ENCODE measurements at regions of chr19 and their contacts with region 1.

Region 1: GRCh38 chr19:28466107-28467045 is 746.6 kb downstream of the UQCRFS1 start:
- DNase-seq: peak; percentile 45 to 58
- ATAC-seq: peak in 3 of 8 donors; percentile 11 to 57 (median 42)
- H3K4me3 ChIP-seq: no peak overlapping the region
- H3K27ac ChIP-seq: no peak overlapping the region
- H3K4me1 ChIP-seq: peaks cover 0 to 19% (median 4%) of the 10 kb centered on the region in 9 donors
- H3K27me3 ChIP-seq: peaks cover 0 to 30% (median 8%) of the 10 kb centered on the region in 7 donors
- CTCF ChIP-seq: peak; percentile 57 to 88 (median 79)

Region 2: GRCh38 chr19:28633319-28634018 is 167.1 kb after region 1 on chr19:
- intact Hi-C with region 1: loop called in 8 of 10 experiments (anchors 2 to 10 kb)
- DNase-seq: no peak
- ATAC-seq: peak in 2 of 8 donors; percentile 35 to 61
- H3K4me3 ChIP-seq: no peak overlapping the region
- H3K27ac ChIP-seq: no peak overlapping the region
- H3K4me1 ChIP-seq: no peaks in the 10 kb centered on the region
- H3K27me3 ChIP-seq: peaks cover 0 to 7% (median 0%) of the 10 kb centered on the region in 7 donors
- CTCF ChIP-seq: peak; percentile 34 to 84 (median 65)

Region 3: GRCh38 chr19:28705008-28705407 is 238.6 kb after region 1 on chr19:
- intact Hi-C with region 1: loop called in 9 of 10 experiments (anchors 1 to 10 kb)
- DNase-seq: no peak
- ATAC-seq: no peak
- H3K4me3 ChIP-seq: no peak overlapping the region
- H3K27ac ChIP-seq: no peak overlapping the region
- H3K4me1 ChIP-seq: no peaks in the 10 kb centered on the region
- H3K27me3 ChIP-seq: peaks cover 0 to 3% (median 0%) of the 10 kb centered on the region in 7 donors
- CTCF ChIP-seq: no peak

Region 4: GRCh38 chr19:28710278-28710677 is 243.9 kb after region 1 on chr19:
- intact Hi-C with region 1: loop called in 9 of 10 experiments (anchors 1 to 10 kb)
- DNase-seq: no peak
- ATAC-seq: no peak
- H3K4me3 ChIP-seq: no peak overlapping the region
- H3K27ac ChIP-seq: no peak overlapping the region
- H3K4me1 ChIP-seq: no peaks in the 10 kb centered on the region
- H3K27me3 ChIP-seq: peaks cover 0 to 8% (median 0%) of the 10 kb centered on the region in 7 donors
- CTCF ChIP-seq: peak; percentile 34 to 79 (median 71)

Region 5: DNA sequence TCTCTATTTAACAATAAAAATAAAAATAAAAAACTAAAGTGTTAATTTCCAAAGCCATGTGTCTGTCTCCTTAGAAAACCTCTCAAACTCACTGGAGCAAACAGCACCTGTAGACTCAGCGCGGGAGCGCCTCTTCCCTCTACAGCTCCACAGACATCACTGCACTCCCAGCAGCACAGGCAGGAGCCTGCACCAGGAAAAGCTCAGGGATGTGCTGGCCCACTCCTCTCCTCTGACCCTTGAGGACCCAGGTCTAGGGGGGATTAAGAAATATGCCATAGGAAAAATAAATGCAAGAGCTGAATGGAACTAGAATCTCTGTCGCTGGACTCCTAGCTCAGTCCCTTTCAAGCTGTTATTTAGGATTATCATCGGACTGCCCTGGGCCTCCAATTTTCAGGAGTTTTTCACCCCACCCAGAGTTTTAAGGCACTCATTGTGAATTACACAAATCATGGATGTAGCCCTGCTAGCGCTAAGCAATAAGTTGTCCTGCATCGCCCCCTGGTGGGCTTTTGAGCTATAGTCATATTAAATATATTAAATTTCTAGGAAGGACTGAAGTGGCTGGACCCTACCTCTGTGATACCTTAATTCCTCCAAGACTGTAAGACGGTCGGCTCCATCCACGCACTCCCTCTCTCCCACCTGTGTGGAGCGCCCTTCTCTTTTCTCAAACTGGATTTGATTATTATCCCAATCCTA is 412.6 kb after region 1 on chr19:
- intact Hi-C with region 1: loop called (anchors 2 to 10 kb)
- DNase-seq: peak; percentile 61 to 64
- ATAC-seq: peak in 5 of 8 donors; percentile 15 to 38 (median 29)
- H3K4me3 ChIP-seq: no peak overlapping the region
- H3K27ac ChIP-seq: no peak overlapping the region
- H3K4me1 ChIP-seq: peaks cover 0 to 20% (median 6%) of the 10 kb centered on the region in 9 donors
- H3K27me3 ChIP-seq: peaks cover 0 to 4% (median 0%) of the 10 kb centered on the region in 7 donors
- CTCF ChIP-seq: peak; percentile 58 to 82 (median 71)

Measured in heart right ventricle (tissue), 16 donors.